Right lobe of liver (tissue), 6 donors: ENCODE measurements at regions of chr10 and their contacts with region 1.

Region 1: GRCh38 chr10:15433850-15434537 is 62.9 kb upstream of the FAM171A1 start:
- DNase-seq: no peak
- ATAC-seq: peak; percentile 83 to 92 (median 86)
- H3K4me3 ChIP-seq: peak overlapping the region in 1 of 3 donors; percentile 27
- H3K27ac ChIP-seq: no peak overlapping the region
- H3K4me1 ChIP-seq: no peaks in the 10 kb centered on the region
- H3K27me3 ChIP-seq: no peaks in the 10 kb centered on the region
- CTCF ChIP-seq: peak; percentile 64 to 82 (median 74)
- POLR2A ChIP-seq: no peak

Region 2: DNA sequence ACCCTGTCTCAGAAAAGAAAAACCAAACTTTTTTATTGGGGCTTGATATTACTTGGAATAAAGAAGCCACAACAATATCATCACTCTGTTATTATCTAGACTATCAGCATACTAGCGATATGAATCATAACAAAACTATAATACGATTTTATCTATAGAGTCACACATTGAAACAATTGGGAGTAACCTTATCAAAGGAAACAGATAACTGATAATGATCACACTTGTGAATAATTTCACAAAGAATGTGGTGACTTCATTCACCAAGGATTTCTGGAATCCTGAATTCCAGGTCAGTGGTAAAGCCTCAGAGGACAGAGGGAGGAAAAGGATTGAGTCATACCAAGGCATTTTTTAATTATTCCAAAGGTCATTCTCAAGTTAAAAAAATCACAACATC is 233.4 kb before region 1 on chr10:
- intact Hi-C with region 1: no loop called
- DNase-seq: no peak
- ATAC-seq: peak in 2 of 4 donors; percentile 53 to 80
- H3K4me3 ChIP-seq: no peak overlapping the region
- H3K27ac ChIP-seq: no peak overlapping the region
- H3K4me1 ChIP-seq: no peaks in the 10 kb centered on the region
- H3K27me3 ChIP-seq: no peaks in the 10 kb centered on the region
- CTCF ChIP-seq: no peak
- POLR2A ChIP-seq: no peak

Region 3: DNA sequence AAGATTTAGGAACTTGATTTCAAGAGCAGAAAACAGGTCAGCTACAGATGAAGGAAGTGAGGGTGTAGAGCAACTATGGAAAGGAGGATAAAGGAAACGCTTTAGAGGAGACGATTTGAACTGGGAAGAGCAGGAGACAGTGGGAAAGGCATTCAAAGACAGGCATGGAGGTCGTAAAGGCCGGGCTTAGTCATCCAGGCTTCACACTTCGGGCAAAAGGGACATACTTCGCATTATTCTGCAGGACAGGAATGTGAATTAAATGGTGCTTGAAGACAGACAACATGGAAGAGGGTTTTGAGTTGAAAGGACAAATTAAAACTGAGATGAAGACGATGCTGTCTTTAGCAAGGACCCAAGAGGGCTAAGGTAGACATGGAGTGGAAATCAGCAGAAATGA is 71.0 kb before region 1 on chr10:
- intact Hi-C with region 1: no loop called
- DNase-seq: no peak
- ATAC-seq: no peak
- H3K4me3 ChIP-seq: no peak overlapping the region
- H3K27ac ChIP-seq: no peak overlapping the region
- H3K4me1 ChIP-seq: no peaks in the 10 kb centered on the region
- H3K27me3 ChIP-seq: no peaks in the 10 kb centered on the region
- CTCF ChIP-seq: no peak
- POLR2A ChIP-seq: no peak

Region 4: GRCh38 chr10:15719899-15720634 is 286.1 kb after region 1 on chr10 and contains the start of gene ITGA8:
- intact Hi-C with region 1: loop called (anchors 5 to 10 kb)
- DNase-seq: peak in 1 of 3 donors; percentile 49
- ATAC-seq: peak; percentile 32 to 83 (median 66)
- H3K4me3 ChIP-seq: peak within 1 kb of the TSS; percentile 25 to 41 (median 30)
- H3K27ac ChIP-seq: no peak within 1 kb of the TSS
- H3K4me1 ChIP-seq: no peaks in the 10 kb centered on the region
- H3K27me3 ChIP-seq: peaks cover 0 to 10% of the 10 kb centered on the region in 2 donors
- CTCF ChIP-seq: peak in 3 of 4 donors; percentile 6 to 29 (median 24)
- POLR2A ChIP-seq: no peak
- total RNA-seq, gene ITGA8: 0.18 to 0.80 (median 0.36) TPM

Region 5: GRCh38 chr10:15725603-15726002 is 291.6 kb after region 1 on chr10:
- intact Hi-C with region 1: loop called (anchors 5 to 10 kb)
- DNase-seq: no peak
- ATAC-seq: peak; percentile 65 to 80 (median 74)
- H3K4me3 ChIP-seq: no peak overlapping the region
- H3K27ac ChIP-seq: no peak overlapping the region
- H3K4me1 ChIP-seq: no peaks in the 10 kb centered on the region
- H3K27me3 ChIP-seq: no peaks in the 10 kb centered on the region
- CTCF ChIP-seq: peak; percentile 39 to 58 (median 49)
- POLR2A ChIP-seq: no peak